Prostate gland (tissue), 2 donors: ENCODE measurements at regions of chr11 and their contacts with region 1.

Region 1: DNA sequence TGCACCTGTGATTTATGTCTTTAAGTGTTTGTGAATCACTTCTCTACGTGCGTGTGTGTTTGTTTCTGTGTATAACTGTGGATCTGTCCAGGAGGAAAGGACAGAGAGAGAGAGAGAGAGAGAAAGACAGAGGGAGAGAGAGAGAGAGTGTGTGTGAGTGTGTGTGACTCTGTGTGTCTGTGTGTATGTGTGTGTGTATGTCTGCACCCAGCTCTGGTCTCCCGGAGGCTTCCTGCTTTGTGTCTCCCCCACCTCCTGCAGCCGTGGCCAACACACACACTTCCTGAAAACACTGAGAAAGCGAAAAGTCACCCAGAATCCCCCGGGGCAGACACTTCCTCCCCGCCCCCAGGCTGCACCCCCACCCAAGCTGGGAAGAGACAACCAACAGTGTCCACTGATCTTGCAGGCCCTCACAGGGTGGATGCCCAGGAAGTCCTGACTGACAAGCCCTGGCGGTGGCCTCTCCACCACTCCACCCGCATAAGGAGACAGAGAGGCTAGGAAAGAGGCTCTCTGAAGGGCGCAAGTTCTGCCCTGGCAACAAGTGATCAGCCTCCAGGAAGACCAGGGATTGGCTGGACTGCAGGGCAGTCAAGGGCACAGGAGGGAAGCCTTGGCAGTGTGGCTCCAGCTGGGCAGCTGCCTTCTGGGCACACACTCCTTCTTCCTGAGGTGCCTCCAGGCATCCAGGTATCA is 30.0 kb downstream of the ARAP1 start:
- DNase-seq: peak; percentile 88
- H3K4me3 ChIP-seq: peak overlapping the region; percentile 49 to 59
- H3K27ac ChIP-seq: peak overlapping the region; percentile 82 to 89
- H3K4me1 ChIP-seq: peaks cover 10% of the 10 kb centered on the region
- H3K27me3 ChIP-seq: no peaks in the 10 kb centered on the region
- CTCF ChIP-seq: peak in 3 of 4 experiments; percentile 10 to 48 (median 11)
- POLR2A ChIP-seq: peak; percentile 70

Region 2: DNA sequence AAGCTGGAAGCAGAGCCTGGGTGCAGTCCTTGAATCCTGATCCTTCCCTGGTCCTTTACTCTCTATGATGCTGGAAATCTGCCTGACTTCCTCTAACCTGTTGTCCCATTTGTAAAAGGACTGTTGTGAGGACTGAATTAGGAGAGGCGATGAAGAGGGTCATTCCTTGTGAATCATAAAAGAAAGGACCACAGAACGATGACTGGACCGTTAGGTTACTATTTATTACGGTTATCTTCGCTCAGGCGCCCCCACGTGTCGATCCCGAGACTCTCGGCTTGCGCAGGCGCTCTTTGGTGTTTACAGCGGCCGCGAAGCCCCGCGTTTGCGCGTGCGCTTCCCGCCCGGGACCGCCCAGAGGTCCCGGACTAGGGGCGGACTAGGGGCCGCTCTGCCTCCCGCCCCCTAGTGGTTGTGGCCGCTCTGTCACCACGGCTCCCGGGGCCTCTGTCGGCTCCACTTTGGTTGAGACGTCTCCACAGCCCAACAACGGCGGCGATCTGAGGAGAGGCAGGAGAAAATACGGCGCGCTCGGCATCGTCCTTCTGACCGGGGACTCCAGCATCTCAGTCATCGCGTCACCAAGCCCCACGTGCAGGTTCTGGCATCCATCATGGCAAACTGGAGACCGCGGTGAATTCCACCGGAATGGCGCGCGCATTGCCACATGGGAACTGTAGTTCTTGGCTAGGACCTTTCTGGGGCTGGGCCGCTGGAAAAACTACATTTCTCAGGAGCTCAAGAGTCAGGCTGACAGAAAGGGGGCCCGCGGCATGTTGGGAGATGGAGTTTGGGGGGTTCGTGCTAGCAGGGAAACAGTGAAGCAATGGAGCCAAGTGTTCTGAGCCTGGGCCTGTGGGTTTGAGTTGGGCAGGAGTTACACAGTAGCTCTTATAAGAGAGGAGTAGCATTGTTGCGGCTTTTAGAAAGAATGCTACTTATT is 71.5 kb after region 1 on chr11 and contains the start of gene STARD10:
- intact Hi-C with region 1: loop called (anchors 1 kb)
- DNase-seq: peak; percentile 94
- H3K4me3 ChIP-seq: peak within 1 kb of the TSS; percentile 53 to 56
- H3K27ac ChIP-seq: peak within 1 kb of the TSS; percentile 92 to 95
- H3K4me1 ChIP-seq: no peaks in the 10 kb centered on the region
- H3K27me3 ChIP-seq: no peaks in the 10 kb centered on the region
- CTCF ChIP-seq: peak; percentile 100
- POLR2A ChIP-seq: peak; percentile 49
- total RNA-seq, gene STARD10: 132 to 208 TPM

Region 3: DNA sequence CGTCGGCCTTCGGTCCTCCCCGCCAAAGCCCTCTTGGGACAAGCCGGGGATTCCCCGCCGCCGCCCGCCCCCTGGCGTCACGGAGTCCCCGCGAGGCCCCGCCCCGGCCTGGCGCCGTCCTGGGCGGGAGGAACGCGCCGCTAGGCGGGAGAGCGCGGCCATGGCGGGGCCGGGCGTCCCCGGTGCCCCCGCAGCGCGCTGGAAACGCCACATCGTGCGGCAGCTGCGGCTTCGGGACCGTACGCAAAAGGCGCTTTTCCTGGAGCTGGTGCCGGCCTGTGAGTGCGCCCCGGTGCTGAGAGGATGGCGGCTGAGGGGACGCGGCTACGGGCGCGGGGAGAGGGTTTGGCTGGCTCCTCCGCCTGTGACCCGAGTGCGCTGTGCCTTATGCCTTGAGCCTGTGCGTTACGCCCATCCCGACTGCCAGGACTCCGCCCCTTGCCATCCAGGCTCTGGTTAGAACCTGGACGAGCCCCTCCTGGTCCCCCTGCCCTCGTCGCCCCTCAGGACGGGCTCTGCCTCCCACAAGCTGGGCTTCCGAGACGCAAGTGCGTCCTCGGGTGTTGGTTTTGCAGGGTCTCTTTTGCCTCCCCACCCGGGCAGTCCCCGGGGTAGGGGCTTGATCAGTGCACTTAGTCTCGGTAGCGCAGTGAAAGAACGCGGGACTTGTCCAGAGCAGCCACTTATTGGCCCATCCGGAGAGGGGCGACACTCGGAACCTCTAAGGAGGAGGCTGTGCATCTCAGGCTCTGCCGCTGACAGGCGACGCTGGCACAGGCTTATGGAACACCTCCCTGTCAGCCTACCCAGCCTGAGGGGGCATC is 92.3 kb after region 1 on chr11 and contains the start of gene ATG16L2:
- intact Hi-C with region 1: loop called (anchors 5 kb)
- DNase-seq: peak; percentile 77
- H3K4me3 ChIP-seq: peak within 1 kb of the TSS; percentile 82 to 88
- H3K27ac ChIP-seq: peak within 1 kb of the TSS; percentile 95 to 96
- H3K4me1 ChIP-seq: peaks cover 5% of the 10 kb centered on the region
- H3K27me3 ChIP-seq: no peaks in the 10 kb centered on the region
- CTCF ChIP-seq: peak in 3 of 4 experiments; percentile 50 to 78 (median 66)
- POLR2A ChIP-seq: peak; percentile 78
- total RNA-seq, gene ATG16L2: 27.5 to 29.7 TPM